Activated naive CD4-positive, alpha-beta T cell treated with anti-CD3 and anti-CD28 coated beads for 36 hours (primary cell): ENCODE measurements at regions of chr4 and their contacts with region 1.

Region 1: GRCh38 chr4:150867148-150867547 is 147.9 kb downstream of the LRBA start:
- DNase-seq: peak; percentile 36
- H3K4me3 Mint-ChIP-seq: no peak overlapping the region
- H3K27ac Mint-ChIP-seq: no peak overlapping the region
- H3K4me1 Mint-ChIP-seq: no peaks in the 10 kb centered on the region
- H3K27me3 Mint-ChIP-seq: no peaks in the 10 kb centered on the region

Region 2: DNA sequence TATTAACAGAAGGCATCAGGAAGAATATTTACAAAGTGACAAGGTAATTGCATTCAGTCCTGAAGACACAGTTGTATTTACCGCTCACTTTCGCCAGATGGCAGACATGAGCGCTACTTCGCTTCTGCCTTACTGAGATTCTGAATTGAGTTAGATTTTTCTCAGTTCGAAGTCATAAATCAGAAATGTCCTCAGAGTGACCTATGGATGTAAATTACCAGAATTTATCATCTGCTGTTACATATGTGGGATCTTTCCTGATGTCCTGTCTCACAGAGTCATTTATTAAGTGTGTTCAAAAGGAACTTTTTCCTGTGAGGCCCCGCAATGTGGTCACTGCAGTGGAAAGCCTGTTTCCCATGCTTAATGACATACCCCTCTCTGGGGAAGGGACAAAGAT is 886.2 kb before region 1 on chr4:
- CTCF ChIA-PET with region 1: no interaction called
- intact Hi-C with region 1: loop called (anchors 1 kb)
- DNase-seq: peak; percentile 69
- H3K4me3 Mint-ChIP-seq: no peak overlapping the region
- H3K27ac Mint-ChIP-seq: no peak overlapping the region
- H3K4me1 Mint-ChIP-seq: no peaks in the 10 kb centered on the region
- H3K27me3 Mint-ChIP-seq: no peaks in the 10 kb centered on the region

Region 3: DNA sequence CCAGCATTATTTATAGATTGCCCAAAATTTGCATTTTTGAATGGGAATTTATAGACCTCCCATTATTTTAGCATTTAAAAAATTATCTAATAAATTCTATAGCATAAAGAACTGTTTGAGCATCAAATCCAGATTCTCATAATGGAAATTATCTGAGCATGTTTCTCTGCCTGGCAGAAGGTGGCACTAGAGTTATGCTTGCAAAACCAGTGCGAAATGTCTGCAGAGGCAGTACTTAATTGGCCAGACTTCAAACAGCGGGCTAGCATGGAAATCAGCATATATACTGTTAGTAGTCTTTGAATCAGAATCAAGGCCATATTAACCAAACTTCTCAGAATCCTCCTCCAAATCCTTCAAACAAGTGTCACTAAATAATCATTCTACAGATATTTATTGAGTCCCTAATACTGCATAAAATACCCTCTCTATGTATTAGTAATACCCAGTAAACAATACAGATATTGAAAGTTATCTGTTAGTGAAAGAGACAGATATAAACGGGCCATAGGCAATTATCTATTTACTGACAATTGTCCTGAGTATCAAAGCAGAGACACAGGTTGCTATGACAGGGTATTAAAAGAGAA is 867.6 kb before region 1 on chr4:
- CTCF ChIA-PET with region 1: no interaction called
- intact Hi-C with region 1: loop called (anchors 5 kb)
- DNase-seq: peak; percentile 11
- H3K4me3 Mint-ChIP-seq: no peak overlapping the region
- H3K27ac Mint-ChIP-seq: no peak overlapping the region
- H3K4me1 Mint-ChIP-seq: no peaks in the 10 kb centered on the region
- H3K27me3 Mint-ChIP-seq: peaks cover 17% of the 10 kb centered on the region

Region 4: DNA sequence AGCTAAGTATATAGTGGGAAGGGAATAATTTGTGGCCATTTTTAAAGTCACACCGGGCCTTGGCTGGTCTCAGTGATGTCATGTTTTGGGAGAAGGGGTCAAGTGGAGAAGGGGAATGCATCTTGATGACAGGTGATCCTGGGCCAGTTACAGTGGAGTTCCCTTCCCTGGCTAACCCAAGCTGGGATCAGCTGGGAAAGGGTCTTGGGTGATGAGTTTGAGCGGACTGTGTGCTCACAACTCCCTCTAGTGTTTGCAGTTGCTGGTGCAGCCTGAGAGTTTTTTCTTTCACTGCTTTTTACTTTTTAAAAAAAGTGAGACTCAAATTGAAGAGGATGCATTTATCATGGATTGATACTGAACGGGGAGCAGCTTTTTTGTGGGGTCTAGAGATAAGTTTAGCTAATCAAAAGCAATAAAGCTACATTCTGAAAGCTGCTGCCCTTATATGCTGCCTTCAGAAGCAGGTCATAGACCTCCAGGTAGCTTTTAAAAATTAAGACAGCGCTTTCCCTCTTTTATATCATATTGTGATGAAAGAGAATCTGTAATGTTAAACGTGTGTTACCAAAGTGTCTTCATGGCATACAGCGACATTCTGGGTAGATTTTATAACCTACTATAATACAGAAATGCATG is 624.2 kb before region 1 on chr4:
- CTCF ChIA-PET with region 1: interaction called, 7 read pairs
- intact Hi-C with region 1: loop called (anchors 5 kb)
- DNase-seq: peak; percentile 33
- H3K4me3 Mint-ChIP-seq: no peak overlapping the region
- H3K27ac Mint-ChIP-seq: no peak overlapping the region
- H3K4me1 Mint-ChIP-seq: no peaks in the 10 kb centered on the region
- H3K27me3 Mint-ChIP-seq: peaks cover 2% of the 10 kb centered on the region

Region 5: DNA sequence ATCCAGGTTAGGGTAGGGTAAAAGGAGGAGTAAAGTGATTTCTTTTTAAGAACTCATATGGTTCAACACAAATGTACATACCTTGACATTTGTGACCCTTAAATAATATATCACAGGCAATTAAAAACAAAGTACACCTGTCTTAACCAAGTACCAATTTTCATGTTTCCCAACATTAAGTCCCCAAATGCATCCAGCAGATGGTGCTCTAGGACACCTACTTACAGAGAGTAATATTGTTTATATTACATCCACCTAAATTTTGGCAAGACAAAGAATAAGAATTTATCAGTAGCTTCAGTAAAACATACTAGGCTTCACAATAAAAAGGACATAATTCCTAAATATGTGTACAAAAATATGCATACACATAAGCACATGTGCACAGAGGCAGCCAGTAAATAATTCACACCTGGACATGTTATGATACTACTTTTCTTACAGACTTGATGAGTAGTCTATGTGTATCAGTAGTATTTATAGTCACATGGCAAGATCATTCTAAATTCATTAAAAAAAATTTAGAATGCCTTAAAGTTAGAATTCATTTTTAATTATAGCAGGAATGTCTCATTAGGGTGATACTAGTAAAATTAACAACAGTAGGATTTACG is 569.2 kb before region 1 on chr4:
- CTCF ChIA-PET with region 1: interaction called, 5 read pairs
- intact Hi-C with region 1: loop called (anchors 1 kb)
- DNase-seq: peak; percentile 68
- H3K4me3 Mint-ChIP-seq: no peak overlapping the region
- H3K27ac Mint-ChIP-seq: no peak overlapping the region
- H3K4me1 Mint-ChIP-seq: peaks cover 14% of the 10 kb centered on the region
- H3K27me3 Mint-ChIP-seq: no peaks in the 10 kb centered on the region

Region 6: DNA sequence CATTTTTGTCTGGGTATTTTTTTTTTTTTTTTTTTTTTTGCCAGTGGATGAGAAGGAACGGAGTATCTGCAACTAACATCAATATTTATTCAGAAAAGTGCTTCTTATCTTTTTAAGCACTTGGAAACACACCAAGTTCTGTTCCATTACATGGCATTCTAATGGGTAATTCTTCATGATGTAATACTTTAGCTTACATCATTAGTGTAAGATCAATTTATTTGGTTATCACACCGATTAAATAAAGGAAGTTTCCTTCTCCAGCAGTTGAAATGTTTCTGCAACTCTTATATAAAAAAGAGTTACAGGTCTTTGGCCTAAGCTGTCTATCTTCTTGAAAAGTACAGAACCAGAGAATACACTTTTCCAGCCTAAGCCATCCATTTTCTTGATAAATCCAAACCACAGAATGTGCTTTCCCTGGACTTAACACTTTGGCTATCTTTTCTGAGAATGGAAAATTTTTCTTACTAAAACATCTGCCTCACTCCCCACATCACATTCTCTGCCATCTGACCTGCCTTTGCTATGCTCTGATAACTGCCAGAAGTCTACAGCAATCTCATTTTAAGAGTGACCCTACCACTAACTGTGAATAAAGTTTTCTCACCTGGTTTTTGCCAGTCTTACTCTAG is 477.1 kb before region 1 on chr4:
- CTCF ChIA-PET with region 1: no interaction called
- intact Hi-C with region 1: no loop called
- DNase-seq: no peak
- H3K4me3 Mint-ChIP-seq: no peak overlapping the region
- H3K27ac Mint-ChIP-seq: no peak overlapping the region
- H3K4me1 Mint-ChIP-seq: no peaks in the 10 kb centered on the region
- H3K27me3 Mint-ChIP-seq: no peaks in the 10 kb centered on the region

Region 7: GRCh38 chr4:150855981-150856510 is 11.1 kb before region 1 on chr4:
- CTCF ChIA-PET with region 1: interaction called, 18 read pairs
- intact Hi-C with region 1: no loop called
- DNase-seq: no peak
- H3K4me3 Mint-ChIP-seq: no peak overlapping the region
- H3K27ac Mint-ChIP-seq: no peak overlapping the region
- H3K4me1 Mint-ChIP-seq: no peaks in the 10 kb centered on the region
- H3K27me3 Mint-ChIP-seq: no peaks in the 10 kb centered on the region

Region 8: GRCh38 chr4:150890246-150890645 is 23.1 kb after region 1 on chr4:
- CTCF ChIA-PET with region 1: no interaction called
- intact Hi-C with region 1: no loop called
- DNase-seq: no peak
- H3K4me3 Mint-ChIP-seq: no peak overlapping the region
- H3K27ac Mint-ChIP-seq: no peak overlapping the region
- H3K4me1 Mint-ChIP-seq: peaks cover 14% of the 10 kb centered on the region
- H3K27me3 Mint-ChIP-seq: no peaks in the 10 kb centered on the region

Region 9: DNA sequence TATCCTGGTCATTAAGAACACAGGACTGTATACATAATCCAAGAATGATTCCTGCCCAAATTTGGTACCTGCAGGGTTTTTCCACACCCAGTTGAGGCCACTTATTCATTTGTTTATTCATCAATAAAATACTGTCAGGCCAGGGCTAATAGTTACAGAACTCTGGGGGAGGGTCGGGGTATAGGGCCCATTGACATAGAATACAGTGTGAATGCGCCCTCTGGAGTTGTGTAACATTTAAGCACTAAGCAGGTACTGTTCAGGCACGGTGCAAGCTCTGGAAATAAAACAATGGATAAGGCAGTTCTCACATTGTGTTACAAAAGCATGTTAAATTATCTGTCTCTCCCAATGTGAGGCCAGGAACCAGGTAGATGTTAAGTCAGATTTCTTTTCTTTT is 178.8 kb after region 1 on chr4:
- CTCF ChIA-PET with region 1: interaction called, 3 read pairs
- intact Hi-C with region 1: loop called (anchors 1 kb)
- DNase-seq: peak; percentile 36
- H3K4me3 Mint-ChIP-seq: no peak overlapping the region
- H3K27ac Mint-ChIP-seq: no peak overlapping the region
- H3K4me1 Mint-ChIP-seq: peaks cover 4% of the 10 kb centered on the region
- H3K27me3 Mint-ChIP-seq: no peaks in the 10 kb centered on the region

Region 10: DNA sequence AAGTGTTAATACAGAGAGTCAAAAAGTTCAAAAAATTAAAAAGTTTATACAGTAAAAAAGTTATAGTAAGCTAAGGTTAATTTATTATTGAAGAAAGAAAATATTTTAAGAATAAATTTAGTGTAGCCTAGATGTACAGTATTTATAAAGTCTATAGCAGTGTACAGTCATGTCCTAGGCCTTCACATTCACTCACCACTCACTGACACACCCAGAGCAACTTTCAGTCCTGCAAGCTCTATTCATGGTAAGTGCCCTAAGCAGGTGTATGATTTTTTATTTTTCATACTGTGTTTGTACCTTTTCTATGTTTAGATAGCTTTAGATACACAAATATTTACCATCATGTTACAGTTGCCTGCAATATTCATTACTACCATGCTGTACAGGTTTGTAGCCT is 650.7 kb after region 1 on chr4:
- CTCF ChIA-PET with region 1: no interaction called
- intact Hi-C with region 1: no loop called
- DNase-seq: no peak
- H3K4me3 Mint-ChIP-seq: no peak overlapping the region
- H3K27ac Mint-ChIP-seq: no peak overlapping the region
- H3K4me1 Mint-ChIP-seq: no peaks in the 10 kb centered on the region
- H3K27me3 Mint-ChIP-seq: no peaks in the 10 kb centered on the region